A549 (cell line): ENCODE measurements at regions of chr13 and their contacts with region 1.

Region 1: GRCh38 chr13:102800145-102801041 is 1.5 kb downstream of the BIVM start:
- DNase-seq: peak; percentile 68 to 76
- ATAC-seq: peak; percentile 88 to 91
- H3K4me3 ChIP-seq: peak overlapping the region; percentile 83
- H3K27ac ChIP-seq: peak overlapping the region; percentile 88 to 98
- H3K4me1 ChIP-seq: peaks cover 7% of the 10 kb centered on the region; the same call in 1 of the 3 replicates
- CTCF ChIP-seq: peak; percentile 57
- EP300 ChIP-seq: no peak
- POLR2A ChIP-seq: peak; percentile 38
- RAD21 ChIP-seq: peak in 1 of 2 experiments; percentile 29; a peak in 1 of 5 replicates

Region 2: GRCh38 chr13:102440259-102440936 is 360.0 kb before region 1 on chr13:
- CTCF ChIA-PET with region 1: no interaction called
- POLR2A ChIA-PET with region 1: no interaction called
- DNase-seq: no peak
- ATAC-seq: no peak
- H3K4me3 ChIP-seq: no peak overlapping the region
- H3K27ac ChIP-seq: no peak overlapping the region; a peak in 1 of 6 replicates
- H3K4me1 ChIP-seq: no peaks in the 10 kb centered on the region
- CTCF ChIP-seq: no peak
- EP300 ChIP-seq: no peak
- POLR2A ChIP-seq: no peak
- RAD21 ChIP-seq: no peak

Region 3: DNA sequence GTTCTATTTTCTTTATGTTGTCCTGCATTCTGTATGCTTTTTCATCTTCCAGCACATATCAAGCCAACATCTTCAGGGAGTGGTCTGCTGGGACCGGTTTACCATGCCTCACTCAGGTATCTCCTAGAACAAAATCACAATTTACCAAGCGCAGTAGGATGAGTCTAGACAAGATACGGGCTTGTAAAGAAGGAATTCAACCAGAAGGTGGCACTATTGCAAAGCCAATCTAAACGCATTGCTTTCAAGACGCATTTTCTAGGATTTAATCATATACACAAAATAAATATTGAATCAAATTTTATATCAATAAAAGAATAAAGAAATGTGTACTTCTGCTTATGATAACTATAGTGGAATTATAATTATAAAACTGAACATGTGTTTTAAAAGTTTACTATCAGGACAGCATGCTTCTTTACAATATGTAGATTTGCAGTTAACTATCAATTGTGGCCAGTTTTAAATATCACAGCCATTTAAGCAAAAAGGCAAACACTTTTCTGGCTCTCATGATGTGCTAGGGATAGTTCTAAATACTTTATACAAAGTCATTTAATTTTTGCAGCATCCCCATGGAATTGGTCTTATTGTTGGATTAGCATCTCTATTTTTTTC is 219.7 kb before region 1 on chr13:
- CTCF ChIA-PET with region 1: interaction called, 15 read pairs
- POLR2A ChIA-PET with region 1: no interaction called
- DNase-seq: peak in 1 of 2 experiments; percentile 65
- ATAC-seq: peak; percentile 66 to 90; a peak in 3 of 6 replicates
- H3K4me3 ChIP-seq: no peak overlapping the region
- H3K27ac ChIP-seq: no peak overlapping the region
- H3K4me1 ChIP-seq: no peaks in the 10 kb centered on the region
- CTCF ChIP-seq: peak; percentile 66
- EP300 ChIP-seq: no peak
- POLR2A ChIP-seq: no peak
- RAD21 ChIP-seq: peak; percentile 71 to 77

Region 4: GRCh38 chr13:102724923-102725322 is 75.5 kb before region 1 on chr13:
- CTCF ChIA-PET with region 1: interaction called, 10 read pairs
- POLR2A ChIA-PET with region 1: no interaction called
- DNase-seq: peak; percentile 17 to 42
- ATAC-seq: peak; percentile 90 to 91
- H3K4me3 ChIP-seq: no peak overlapping the region
- H3K27ac ChIP-seq: no peak overlapping the region
- H3K4me1 ChIP-seq: peaks cover 6% of the 10 kb centered on the region; the same call in 1 of the 3 replicates
- CTCF ChIP-seq: peak; percentile 59
- EP300 ChIP-seq: no peak
- POLR2A ChIP-seq: no peak
- RAD21 ChIP-seq: peak; percentile 66 to 72

Region 5: DNA sequence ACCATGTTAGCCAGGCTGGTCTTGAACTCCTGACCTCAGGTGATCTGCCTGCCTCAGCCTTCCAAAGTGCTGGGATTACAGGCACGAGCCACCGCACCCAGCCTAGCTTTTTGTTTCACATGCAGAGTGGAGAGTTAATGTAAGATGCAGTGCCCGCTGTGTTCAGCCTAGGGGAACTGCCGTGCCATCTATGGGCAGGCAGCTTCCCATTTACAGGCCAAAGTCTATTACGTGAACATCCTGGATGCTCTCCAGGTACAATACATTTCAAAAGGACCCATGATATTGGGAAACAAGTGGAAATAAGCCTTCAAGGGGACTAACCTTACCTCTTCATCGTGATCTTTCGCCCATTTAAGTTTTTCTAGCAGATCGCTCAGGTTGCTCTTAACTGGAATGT is 11.7 kb before region 1 on chr13:
- CTCF ChIA-PET with region 1: interaction called, 11 read pairs
- POLR2A ChIA-PET with region 1: no interaction called
- DNase-seq: no peak
- ATAC-seq: no peak
- H3K4me3 ChIP-seq: no peak overlapping the region
- H3K27ac ChIP-seq: no peak overlapping the region
- H3K4me1 ChIP-seq: no peaks in the 10 kb centered on the region
- CTCF ChIP-seq: no peak
- EP300 ChIP-seq: no peak
- POLR2A ChIP-seq: no peak
- RAD21 ChIP-seq: no peak

Region 6: GRCh38 chr13:102845630-102846260 is 45.4 kb after region 1 on chr13 and contains the start of gene ERCC5:
- CTCF ChIA-PET with region 1: interaction called, 12 read pairs
- POLR2A ChIA-PET with region 1: interaction called, 11 read pairs
- DNase-seq: peak; percentile 28 to 95
- ATAC-seq: peak; percentile 94 to 96
- H3K4me3 ChIP-seq: peak within 1 kb of the TSS; percentile 99
- H3K27ac ChIP-seq: peak within 1 kb of the TSS; percentile 84 to 96
- H3K4me1 ChIP-seq: peaks cover 8% of the 10 kb centered on the region; the same call in 1 of the 3 replicates
- CTCF ChIP-seq: no peak
- EP300 ChIP-seq: no peak
- POLR2A ChIP-seq: peak; percentile 24
- RAD21 ChIP-seq: 0 out of 5 replicates have a peak, but pooled peaks of 1 of the 2 experiments have one; percentile 19
- polyA plus RNA-seq, gene ERCC5: 19.5 and 24.4 TPM in 2 replicates